ENCODE measurements at regions of chr16 and their contacts with region 1.

Region 1: GRCh38 chr16:19238406-19238805 is 47.1 kb upstream of the CLEC19A start:
- DNase-seq: no peak
- ATAC-seq: no peak
- H3K4me3 ChIP-seq: no peak overlapping the region
- H3K27ac ChIP-seq: no peak overlapping the region
- H3K4me1 ChIP-seq: no peaks in the 10 kb centered on the region
- H3K27me3 ChIP-seq: no peaks in the 10 kb centered on the region
- CTCF ChIP-seq: no peak

Region 2: GRCh38 chr16:19252904-19253303 is 14.5 kb after region 1 on chr16:
- CTCF ChIA-PET with region 1: no interaction called
- POLR2A ChIA-PET with region 1: no interaction called
- in situ Hi-C with region 1: no loop called
- intact Hi-C with region 1: loop called (anchors 1 kb)
- DNase-seq: no peak
- ATAC-seq: no peak
- H3K4me3 ChIP-seq: no peak overlapping the region
- H3K27ac ChIP-seq: no peak overlapping the region
- H3K4me1 ChIP-seq: no peaks in the 10 kb centered on the region
- H3K27me3 ChIP-seq: peaks cover 8% of the 10 kb centered on the region
- CTCF ChIP-seq: no peak

Region 3: DNA sequence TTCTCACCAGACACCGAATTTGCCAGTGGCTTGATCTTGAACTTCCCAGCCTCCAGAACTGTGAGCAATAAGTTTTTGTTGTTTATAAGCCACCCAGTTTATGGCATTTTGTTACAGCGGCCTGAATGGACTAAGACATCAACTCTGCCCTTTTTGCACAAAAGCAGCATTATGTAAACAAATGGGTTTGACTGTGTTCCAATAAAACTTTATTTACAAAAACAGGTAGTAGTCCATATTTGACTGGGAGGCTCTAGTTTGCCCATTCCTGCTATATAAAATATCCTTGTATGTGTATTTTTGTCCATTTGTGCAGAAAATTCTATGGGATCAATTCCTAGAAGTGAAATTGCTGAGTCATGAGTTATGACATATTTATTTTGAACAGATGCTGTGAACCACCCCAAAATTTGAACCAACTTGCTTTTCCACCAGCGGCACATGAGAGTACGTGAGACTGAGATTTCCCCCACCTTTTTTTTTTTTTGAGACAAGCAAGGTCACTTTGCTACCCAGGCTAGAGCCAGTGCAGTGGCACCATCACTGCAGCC is 25.8 kb after region 1 on chr16:
- CTCF ChIA-PET with region 1: interaction called, 12 read pairs
- POLR2A ChIA-PET with region 1: no interaction called
- in situ Hi-C with region 1: no loop called
- intact Hi-C with region 1: no loop called
- DNase-seq: no peak
- ATAC-seq: no peak
- H3K4me3 ChIP-seq: no peak overlapping the region
- H3K27ac ChIP-seq: no peak overlapping the region
- H3K4me1 ChIP-seq: no peaks in the 10 kb centered on the region
- H3K27me3 ChIP-seq: peaks cover 13% of the 10 kb centered on the region; the same call in 1 of the 2 replicates
- CTCF ChIP-seq: no peak